ENCODE measurements at regions of chr2 and their contacts with region 1.

Region 1: GRCh38 chr2:198004921-198005829 is 200.8 kb downstream of the PLCL1 start:
- DNase-seq: peak; percentile 65
- ATAC-seq: peak; percentile 82
- H3K4me3 Mint-ChIP-seq: peak overlapping the region; percentile 51
- H3K27ac Mint-ChIP-seq: peak overlapping the region; percentile 89
- H3K4me1 Mint-ChIP-seq: peaks cover 48% of the 10 kb centered on the region
- H3K27me3 Mint-ChIP-seq: no peaks in the 10 kb centered on the region
- CTCF ChIP-seq: no peak

Region 2: GRCh38 chr2:198044777-198045176 is 39.6 kb after region 1 on chr2:
- CTCF ChIA-PET with region 1: no interaction called
- POLR2A ChIA-PET with region 1: no interaction called
- intact Hi-C with region 1: loop called (anchors 2 kb)
- DNase-seq: no peak
- ATAC-seq: peak; percentile 87
- H3K4me3 Mint-ChIP-seq: no peak overlapping the region
- H3K27ac Mint-ChIP-seq: peak overlapping the region; percentile 36
- H3K4me1 Mint-ChIP-seq: peaks cover 25% of the 10 kb centered on the region
- H3K27me3 Mint-ChIP-seq: no peaks in the 10 kb centered on the region
- CTCF ChIP-seq: no peak

Measured in activated CD8-positive, alpha-beta T cell treated with anti-CD3 and anti-CD28 coated beads for 36 hours (primary cell).